ENCODE measurements at regions of chr4 and their contacts with region 1.

Region 1: GRCh38 chr4:166134285-166134684 is 261.2 kb downstream of the TLL1 start:
- DNase-seq: no peak
- H3K4me3 ChIP-seq: no peak overlapping the region
- H3K27ac ChIP-seq: no peak overlapping the region
- H3K4me1 ChIP-seq: no peaks in the 10 kb centered on the region
- H3K27me3 ChIP-seq: no peaks in the 10 kb centered on the region
- CTCF ChIP-seq: no peak
- POLR2A ChIP-seq: no peak

Region 2: DNA sequence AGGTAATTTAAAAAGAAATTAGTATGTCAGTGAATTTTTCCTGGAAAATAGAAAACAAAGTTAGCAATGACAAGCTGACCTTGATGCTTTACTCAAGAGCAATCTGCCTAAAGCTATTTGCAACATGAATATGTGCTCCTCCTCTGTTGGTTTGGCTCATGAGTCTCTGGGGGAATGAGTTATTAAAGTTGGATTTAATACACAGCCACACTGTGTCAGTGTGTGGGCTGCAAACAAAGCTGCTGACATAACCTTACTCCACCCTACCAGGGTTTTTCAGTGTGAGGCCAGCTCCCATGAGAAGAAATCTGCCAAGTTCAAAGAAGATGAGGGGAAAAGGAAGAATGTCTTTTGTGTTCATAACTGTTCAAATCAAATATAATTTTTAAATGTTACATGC is 19.3 kb after region 1 on chr4:
- intact Hi-C with region 1: loop called (anchors 1 kb)
- DNase-seq: no peak
- H3K4me3 ChIP-seq: no peak overlapping the region
- H3K27ac ChIP-seq: no peak overlapping the region
- H3K4me1 ChIP-seq: no peaks in the 10 kb centered on the region
- H3K27me3 ChIP-seq: no peaks in the 10 kb centered on the region
- CTCF ChIP-seq: no peak
- POLR2A ChIP-seq: no peak